OCI-LY7 (cell line): ENCODE measurements at regions of chr10 and their contacts with region 1.

Region 1: DNA sequence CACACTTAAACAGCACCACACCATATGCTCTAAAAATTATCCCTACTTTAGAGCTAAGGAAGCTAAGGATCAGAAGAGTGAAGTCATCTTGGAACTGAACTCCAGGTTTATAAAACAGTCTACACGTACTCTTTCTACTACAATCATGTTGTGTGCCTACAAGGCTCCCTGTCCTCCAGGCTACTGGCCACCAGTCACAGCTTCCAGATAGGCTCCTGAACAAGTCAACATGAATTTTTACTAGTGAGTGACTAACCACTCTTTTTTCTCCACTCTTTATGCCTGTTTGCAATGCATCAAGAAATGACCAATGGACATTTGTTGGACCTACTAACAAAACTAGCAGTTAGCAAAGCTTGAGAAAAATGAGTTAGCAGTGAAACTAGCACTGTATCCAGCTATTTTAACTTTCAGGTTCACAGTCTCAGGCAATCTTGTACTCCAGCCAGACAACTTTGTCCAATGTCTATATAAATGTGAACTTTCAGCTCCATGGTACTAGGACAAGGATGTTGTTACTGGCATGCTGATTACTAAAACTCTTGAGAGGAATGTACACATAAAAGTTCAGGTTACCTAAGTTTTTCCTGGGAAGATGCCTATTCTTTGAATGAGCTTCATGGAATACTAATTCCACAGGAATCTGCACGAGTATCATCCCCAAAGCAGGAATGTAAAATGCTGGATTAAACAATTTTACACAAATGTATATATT is 180.0 kb downstream of the BTAF1 start:
- DNase-seq: no peak
- H3K4me3 ChIP-seq: no peak overlapping the region
- H3K27ac ChIP-seq: no peak overlapping the region
- H3K4me1 ChIP-seq: peaks cover 3% of the 10 kb centered on the region
- CTCF ChIP-seq: no peak

Region 2: DNA sequence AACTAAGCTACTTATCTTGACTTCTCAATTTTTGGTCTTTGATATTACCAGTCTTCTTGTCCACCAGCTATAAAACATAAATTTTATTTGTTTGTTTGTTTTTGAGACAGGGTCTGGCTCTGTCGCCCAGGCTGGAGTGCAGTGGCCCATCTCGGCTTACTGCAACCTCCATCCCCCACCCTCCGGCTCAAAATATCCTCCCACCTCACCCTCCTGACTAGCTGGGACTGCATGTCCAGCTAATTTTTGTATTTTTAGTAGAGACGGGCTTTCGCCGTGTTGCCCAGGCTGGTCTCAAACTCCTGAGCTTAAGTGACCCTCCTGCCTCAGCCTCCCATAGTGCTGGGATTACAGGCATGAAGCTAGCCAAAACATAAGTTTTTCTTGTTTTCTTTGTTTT is 195.0 kb after region 1 on chr10:
- CTCF ChIA-PET with region 1: no interaction called
- POLR2A ChIA-PET with region 1: interaction called, 11 read pairs
- intact Hi-C with region 1: no loop called
- DNase-seq: no peak
- H3K4me3 ChIP-seq: no peak overlapping the region
- H3K27ac ChIP-seq: no peak overlapping the region
- H3K4me1 ChIP-seq: peaks cover 12% of the 10 kb centered on the region
- CTCF ChIP-seq: no peak